HEK293 (cell line): ENCODE measurements at regions of chr2 and their contacts with region 1.

Region 1: GRCh38 chr2:110812726-110813645 is 80.6 kb downstream of the ACOXL start:
- H3K4me3 ChIP-seq: no peak overlapping the region
- H3K27ac ChIP-seq: no peak overlapping the region
- H3K4me1 ChIP-seq: peaks cover 2% of the 10 kb centered on the region; the same call in 1 of the 2 replicates
- CTCF ChIP-seq: no peak

Region 2: DNA sequence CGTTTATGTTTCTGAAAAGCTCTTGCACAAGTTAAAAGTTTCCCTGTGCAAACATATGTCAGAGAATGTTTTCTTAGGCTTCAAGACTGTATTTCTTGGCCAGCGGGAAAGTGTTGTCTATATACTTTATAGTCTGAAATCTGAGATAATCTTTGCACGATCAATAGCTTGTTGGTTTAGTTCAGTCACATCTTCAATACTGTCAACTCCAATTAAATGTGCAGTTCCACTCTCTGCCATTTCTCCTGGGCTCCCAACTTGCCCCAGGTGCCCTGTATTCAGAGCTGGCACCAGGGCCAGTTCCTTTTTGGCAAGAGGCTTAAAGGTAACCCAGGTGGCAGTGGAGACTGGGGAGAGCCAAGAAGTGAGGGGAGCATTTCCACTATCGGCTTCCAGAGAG is 16.2 kb before region 1 on chr2:
- CTCF ChIA-PET with region 1: interaction called, 27 read pairs
- POLR2A ChIA-PET with region 1: no interaction called
- H3K4me3 ChIP-seq: no peak overlapping the region
- H3K27ac ChIP-seq: no peak overlapping the region
- H3K4me1 ChIP-seq: peaks cover 15% of the 10 kb centered on the region
- CTCF ChIP-seq: no peak

Region 3: DNA sequence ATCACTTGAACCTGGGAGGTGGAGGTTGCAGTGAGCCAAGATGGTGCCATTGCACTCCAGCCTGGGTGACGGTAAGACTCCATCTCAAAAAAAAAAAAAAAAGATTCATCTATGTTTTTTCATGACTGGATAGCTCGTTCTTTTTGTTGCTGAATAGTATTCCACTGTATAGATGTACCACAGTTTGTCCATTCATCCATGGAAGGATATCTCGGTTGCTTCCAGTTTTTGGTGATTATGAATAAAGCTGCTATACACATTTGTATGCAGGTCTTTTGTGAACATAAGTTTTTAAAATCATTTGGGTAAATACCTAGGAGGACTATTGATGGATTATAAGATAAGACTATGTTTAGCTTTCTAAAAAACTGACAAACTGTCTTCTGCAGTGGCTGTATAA is 10.2 kb after region 1 on chr2:
- CTCF ChIA-PET with region 1: interaction called, 10 read pairs
- POLR2A ChIA-PET with region 1: no interaction called
- H3K4me3 ChIP-seq: no peak overlapping the region
- H3K27ac ChIP-seq: no peak overlapping the region
- H3K4me1 ChIP-seq: no peaks in the 10 kb centered on the region
- CTCF ChIP-seq: no peak

Region 4: DNA sequence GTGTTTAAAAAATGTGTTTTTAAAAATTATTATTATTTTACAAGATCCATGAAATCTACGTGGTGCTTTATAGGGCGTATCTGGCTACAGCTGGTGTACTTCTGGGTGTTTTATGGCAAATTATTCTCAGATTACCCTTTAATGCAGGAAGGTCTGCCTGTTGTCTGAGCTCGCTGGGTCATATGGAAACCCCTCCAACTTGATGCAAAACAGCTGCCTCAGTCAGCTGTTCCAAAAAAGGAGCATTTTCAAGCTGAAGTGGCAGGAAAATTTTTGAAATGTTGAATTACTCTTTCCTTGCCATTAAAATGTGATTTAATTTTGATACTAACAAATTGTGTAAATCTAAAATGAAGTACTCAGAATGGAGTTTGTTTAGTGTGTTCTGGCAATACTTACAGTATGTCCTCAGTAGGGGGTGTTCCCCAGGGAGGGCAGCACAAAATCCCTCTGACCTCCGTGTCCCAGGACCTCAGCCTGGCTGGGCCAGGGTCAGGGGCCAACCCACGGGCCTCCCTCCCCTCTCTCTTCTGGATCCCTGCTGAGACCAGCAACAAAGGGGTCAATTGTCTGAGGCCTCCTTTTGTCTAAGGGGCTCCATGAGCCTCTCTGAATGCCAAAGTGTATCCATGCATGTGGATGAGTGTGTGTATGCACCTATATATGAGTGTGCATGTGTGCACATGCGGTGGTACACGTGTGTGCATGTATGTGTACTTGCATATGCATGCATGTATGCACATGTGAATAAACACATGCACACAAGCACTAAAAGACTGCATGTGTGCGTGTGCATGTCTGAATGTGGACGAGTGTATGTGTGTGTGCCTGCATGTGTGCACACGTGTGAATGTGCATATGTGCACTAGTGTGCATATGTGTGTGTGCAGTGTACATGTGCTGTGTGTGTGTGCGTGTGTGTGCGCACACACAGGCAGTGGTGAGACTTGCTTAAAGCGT is 24.7 kb after region 1 on chr2:
- CTCF ChIA-PET with region 1: interaction called, 10 read pairs
- POLR2A ChIA-PET with region 1: no interaction called
- H3K4me3 ChIP-seq: no peak overlapping the region
- H3K27ac ChIP-seq: no peak overlapping the region
- H3K4me1 ChIP-seq: peaks cover 10% of the 10 kb centered on the region
- CTCF ChIP-seq: no peak

Region 5: GRCh38 chr2:110853507-110853906 is 40.5 kb after region 1 on chr2:
- CTCF ChIA-PET with region 1: interaction called, 15 read pairs
- POLR2A ChIA-PET with region 1: interaction called, 4 read pairs
- H3K4me3 ChIP-seq: no peak overlapping the region
- H3K27ac ChIP-seq: no peak overlapping the region
- H3K4me1 ChIP-seq: no peaks in the 10 kb centered on the region; the same call in 1 of the 2 replicates
- CTCF ChIP-seq: no peak